HepG2 (cell line): ENCODE measurements at regions of chr19 and their contacts with region 1.

Region 1: DNA sequence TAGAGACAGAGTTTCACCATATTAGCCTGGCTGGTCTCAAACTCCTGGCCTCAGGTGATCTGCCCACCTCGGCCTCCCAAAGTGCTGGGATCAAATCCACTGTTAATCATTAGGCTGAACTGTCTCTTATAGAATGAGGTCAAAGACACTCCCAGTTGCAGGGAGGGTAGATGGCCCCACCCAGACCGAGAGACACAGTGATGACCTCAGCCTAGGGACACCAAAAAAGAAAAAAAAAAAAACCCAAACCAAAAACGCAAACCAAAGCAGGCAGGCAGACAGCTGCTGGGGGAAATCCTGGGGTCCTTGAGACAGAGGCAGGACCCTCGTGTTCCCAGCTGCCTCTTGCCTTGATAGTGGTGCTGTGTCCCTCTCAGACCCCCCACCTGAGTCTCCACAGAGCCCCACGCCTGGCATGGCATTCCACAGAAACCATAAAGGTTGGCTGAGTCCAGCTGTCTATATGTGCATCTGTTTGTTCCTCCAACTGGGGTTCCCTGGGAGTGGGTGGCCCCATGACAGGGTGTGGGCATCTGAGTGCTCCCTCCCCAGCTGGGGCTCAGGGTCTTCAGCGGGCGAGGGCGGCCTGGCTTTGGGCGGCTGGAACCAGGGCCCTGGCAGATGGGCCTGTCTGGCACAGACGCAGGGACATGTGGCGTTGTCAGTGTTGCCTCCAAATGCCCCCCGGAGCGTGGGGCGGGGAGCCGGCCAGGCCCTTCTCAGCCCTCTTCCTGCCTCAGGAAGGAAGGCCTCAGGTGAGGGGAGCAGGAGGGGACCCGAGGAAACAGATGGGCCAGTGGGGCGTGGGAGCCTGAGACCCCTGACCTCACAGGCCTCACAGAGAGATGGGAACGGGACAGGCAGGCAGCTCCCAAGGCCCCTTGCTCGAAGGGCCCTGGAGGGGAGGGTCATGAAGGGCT is 5.2 kb downstream of the DAND5 start:
- DNase-seq: peak; percentile 35
- ATAC-seq: no peak
- H3K4me3 ChIP-seq: peak overlapping the region in 1 of 3 experiments; percentile 38; a peak in 2 of 6 replicates
- H3K27ac ChIP-seq: no peak overlapping the region
- H3K4me1 ChIP-seq: peaks cover 29% of the 10 kb centered on the region
- H3K27me3 ChIP-seq: no peaks in the 10 kb centered on the region
- CTCF ChIP-seq: no peak
- EP300 ChIP-seq: no peak
- POLR2A ChIP-seq: no peak
- RAD21 ChIP-seq: no peak

Region 2: DNA sequence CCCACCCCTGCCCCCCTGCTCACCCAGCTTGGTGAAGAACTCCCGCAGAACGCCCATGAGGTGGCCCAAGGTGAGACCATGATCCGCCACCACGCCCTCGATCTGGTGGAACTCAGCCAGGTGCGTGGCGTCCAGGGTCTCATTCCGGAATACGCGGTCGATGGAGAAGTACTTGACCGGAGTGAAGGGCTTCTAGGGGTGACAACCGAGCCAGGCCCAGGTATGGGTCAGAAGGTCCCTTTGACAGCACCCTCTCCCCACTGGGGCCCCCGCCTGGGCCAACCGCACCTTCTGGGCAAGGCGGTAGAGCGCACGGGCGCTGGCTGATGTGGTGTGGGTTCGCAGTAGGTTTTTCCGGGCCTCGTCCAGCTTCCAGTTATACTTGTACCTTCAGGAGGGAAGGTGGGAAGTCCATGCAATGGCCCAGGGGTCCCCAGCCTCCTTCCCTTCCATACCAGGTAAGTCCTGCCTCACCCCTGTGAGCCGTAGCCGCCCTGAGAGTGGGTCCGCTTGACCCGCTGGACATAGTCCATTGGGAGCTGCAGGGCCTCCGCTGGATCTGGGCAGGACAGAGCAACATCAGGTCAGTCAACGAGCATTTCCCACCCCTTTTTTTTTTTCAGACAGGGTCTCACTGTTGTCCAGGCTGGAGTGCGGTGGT is 49.8 kb before region 1 on chr19:
- CTCF ChIA-PET with region 1: no interaction called
- POLR2A ChIA-PET with region 1: no interaction called
- in situ Hi-C with region 1: no loop called
- intact Hi-C with region 1: no loop called
- DNase-seq: no peak
- ATAC-seq: no peak; the same call in 2 of the 3 replicates
- H3K4me3 ChIP-seq: no peak overlapping the region
- H3K27ac ChIP-seq: no peak overlapping the region
- H3K4me1 ChIP-seq: no peaks in the 10 kb centered on the region
- H3K27me3 ChIP-seq: no peaks in the 10 kb centered on the region; a peak in 1 of 5 replicates
- CTCF ChIP-seq: no peak
- EP300 ChIP-seq: no peak
- POLR2A ChIP-seq: no peak
- RAD21 ChIP-seq: no peak

Region 3: DNA sequence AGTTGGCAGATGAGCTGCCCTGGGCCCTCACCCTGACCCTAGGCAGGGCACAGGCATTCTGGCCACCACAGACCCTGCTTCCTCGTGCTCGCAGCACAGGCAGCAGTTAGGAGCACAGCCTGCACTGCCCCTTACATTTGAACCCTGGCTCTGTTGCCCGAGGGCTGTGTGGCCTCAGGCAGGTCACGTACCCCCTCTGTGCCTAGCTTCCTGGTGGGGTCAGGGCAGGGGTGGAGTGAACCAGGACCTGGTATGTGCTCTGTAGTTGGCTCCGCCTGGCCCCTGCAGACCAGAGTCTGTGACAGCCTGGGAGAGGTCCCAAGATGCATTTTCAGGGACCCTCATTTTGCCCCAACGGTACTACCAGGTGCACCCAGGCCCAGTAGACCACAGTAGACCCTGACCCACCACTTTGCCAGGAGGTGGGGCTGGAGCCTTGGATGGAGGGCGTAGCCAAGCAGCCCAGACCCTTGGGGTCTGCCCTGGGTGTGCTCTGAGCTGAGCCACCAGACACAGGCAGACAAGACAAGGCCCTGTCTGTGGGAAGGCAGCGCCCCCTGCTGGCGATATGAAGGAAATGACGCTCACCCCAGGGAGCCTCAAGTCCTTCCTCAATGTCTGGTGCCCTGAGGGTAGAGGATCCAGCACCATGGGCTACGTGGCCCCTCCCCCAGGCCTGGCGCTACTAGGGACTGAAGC is 119.0 kb after region 1 on chr19:
- CTCF ChIA-PET with region 1: interaction called, 44 read pairs
- POLR2A ChIA-PET with region 1: interaction called, 12 read pairs
- in situ Hi-C with region 1: loop called (anchors 5 kb)
- intact Hi-C with region 1: loop called (anchors 1 kb)
- DNase-seq: peak; percentile 76
- ATAC-seq: peak; percentile 70
- H3K4me3 ChIP-seq: no peak overlapping the region
- H3K27ac ChIP-seq: no peak overlapping the region
- H3K4me1 ChIP-seq: peaks cover 50% of the 10 kb centered on the region
- H3K27me3 ChIP-seq: no peaks in the 10 kb centered on the region
- CTCF ChIP-seq: peak; percentile 98
- EP300 ChIP-seq: no peak
- POLR2A ChIP-seq: 0 out of 4 replicates have a peak, but pooled peaks of 1 of the 2 experiments have one; percentile 11
- RAD21 ChIP-seq: peak; percentile 93

Region 4: DNA sequence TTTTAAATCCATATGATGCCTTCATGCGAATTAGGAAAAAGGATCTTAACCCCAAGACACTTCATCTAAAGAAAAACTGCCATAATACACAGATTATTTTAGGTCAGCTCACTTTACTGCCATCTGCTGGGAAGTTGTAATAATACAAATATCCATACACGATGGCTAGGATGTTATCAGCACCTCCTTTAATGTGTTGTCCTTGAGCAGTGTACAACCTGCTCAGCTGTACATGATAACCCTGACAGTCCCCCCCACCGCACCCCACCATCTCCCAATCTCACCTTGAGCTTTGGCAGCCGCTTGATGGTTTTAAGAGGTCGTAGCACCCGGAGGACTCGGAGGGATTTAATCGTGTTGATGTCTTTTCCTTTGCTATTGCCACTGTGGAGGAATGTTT is 287.9 kb after region 1 on chr19:
- CTCF ChIA-PET with region 1: interaction called, 6 read pairs
- POLR2A ChIA-PET with region 1: no interaction called
- in situ Hi-C with region 1: loop called (anchors 10 kb)
- intact Hi-C with region 1: no loop called
- DNase-seq: peak; percentile 38
- ATAC-seq: no peak; the same call in 2 of the 3 replicates
- H3K4me3 ChIP-seq: no peak overlapping the region
- H3K27ac ChIP-seq: no peak overlapping the region
- H3K4me1 ChIP-seq: no peaks in the 10 kb centered on the region
- H3K27me3 ChIP-seq: peaks cover 1 to 16% of the 10 kb centered on the region in 2 experiments; a peak in 2 of 5 replicates
- CTCF ChIP-seq: peak; percentile 69
- EP300 ChIP-seq: no peak
- POLR2A ChIP-seq: no peak
- RAD21 ChIP-seq: no peak